Left lung (tissue), 14 donors: ENCODE measurements at regions of chr2 and their contacts with region 1.

Region 1: DNA sequence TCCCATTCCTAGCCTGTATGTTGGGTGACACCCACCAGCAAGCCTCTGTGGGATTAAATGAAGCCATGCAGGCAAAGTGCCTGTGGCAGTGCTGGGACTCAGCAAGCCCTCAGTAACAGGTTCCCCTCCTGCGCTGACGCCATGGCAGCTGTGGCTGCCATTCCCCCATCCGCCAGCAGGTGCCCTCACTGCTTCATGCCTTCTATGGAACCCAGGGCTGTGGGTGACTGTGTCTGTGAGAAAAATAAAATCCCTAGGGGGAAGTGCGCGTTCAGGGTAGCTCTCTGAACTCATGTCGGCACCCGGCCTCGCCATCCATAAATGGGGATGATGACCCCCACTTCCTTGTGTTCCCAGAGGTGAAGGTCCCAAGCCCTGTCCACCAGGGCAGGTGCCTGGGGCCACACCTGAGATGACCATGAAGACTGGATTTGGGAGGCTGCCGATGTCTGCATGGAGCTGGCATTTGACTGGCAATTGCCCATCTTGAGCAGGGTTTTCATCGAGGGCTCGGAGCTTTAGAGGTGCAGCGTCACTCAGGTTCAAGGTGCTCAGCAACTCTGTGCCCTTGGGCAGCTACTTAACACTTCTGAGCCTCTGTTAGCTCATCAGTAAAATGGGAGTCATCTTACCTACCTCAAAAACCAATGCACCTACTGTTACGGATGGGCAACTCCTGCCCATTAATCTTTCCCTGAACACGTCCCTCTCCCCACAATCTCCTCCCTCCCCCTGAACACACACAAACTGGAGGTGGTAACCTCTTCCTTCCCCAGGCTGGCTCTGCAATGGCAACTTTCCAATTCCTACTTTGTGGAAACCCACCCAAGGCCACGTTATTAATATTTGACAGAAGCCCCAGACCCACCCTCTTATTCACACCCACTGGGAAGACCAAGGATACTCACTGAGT is 2.9 kb upstream of the MAL start:
- DNase-seq: peak in 3 of 4 donors; percentile 62 to 87 (median 83)
- ATAC-seq: peak; percentile 82
- H3K4me3 ChIP-seq: no peak overlapping the region
- H3K27ac ChIP-seq: no peak overlapping the region
- H3K4me1 ChIP-seq: peaks cover 10 to 14% of the 10 kb centered on the region in 2 donors
- H3K27me3 ChIP-seq: peaks cover 31 to 61% of the 10 kb centered on the region in 2 donors
- CTCF ChIP-seq: peak; percentile 91 to 93

Region 2: DNA sequence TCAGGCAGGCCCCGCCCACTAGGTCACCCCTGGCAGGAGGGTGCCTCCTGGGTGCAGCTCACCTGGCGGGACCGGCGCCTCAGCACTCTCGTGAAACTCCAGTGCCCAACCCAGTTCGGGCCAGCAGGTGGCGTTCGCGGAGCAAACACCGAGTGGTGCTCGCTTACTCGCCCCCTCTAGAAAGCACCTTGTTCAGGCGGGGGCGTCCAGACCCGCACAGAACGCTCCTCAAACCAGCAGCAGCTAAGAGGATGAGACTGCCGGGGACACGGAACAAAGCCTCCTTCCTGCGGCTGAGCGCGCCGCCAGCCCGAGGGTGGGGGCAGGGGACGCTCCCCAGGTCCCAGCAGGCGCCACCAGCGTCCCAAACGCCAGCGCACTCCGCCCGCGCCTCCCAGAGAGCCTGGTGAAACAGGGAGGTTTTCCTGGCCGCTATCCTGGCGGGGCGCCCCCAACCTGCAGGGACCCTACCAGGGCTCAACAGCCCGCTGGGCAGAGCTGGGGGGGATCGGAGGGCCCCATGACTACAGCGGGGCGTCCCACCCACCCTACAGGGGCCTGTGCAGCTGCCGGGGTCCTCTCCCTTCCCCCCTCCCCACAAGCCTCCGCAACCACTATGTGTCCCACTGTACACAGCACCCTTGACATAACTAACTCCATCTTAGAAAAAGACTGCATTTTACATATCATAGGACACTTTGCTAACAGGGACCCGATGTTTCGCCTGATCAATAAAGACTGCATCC is 54.4 kb after region 1 on chr2:
- intact Hi-C with region 1: loop called in 1 of 2 experiments (anchors 5 kb)
- DNase-seq: peak; percentile 42 to 96 (median 84)
- ATAC-seq: peak; percentile 90
- H3K4me3 ChIP-seq: peak overlapping the region; percentile 28 to 31
- H3K27ac ChIP-seq: no peak overlapping the region
- H3K4me1 ChIP-seq: peaks cover 5 to 25% of the 10 kb centered on the region in 2 donors
- H3K27me3 ChIP-seq: peaks cover 0 to 49% of the 10 kb centered on the region in 2 donors
- CTCF ChIP-seq: peak; percentile 83 to 85

Region 3: GRCh38 chr2:95099910-95100309 is 77.3 kb after region 1 on chr2:
- intact Hi-C with region 1: no loop called
- DNase-seq: no peak
- ATAC-seq: no peak
- H3K4me3 ChIP-seq: no peak overlapping the region
- H3K27ac ChIP-seq: no peak overlapping the region
- H3K4me1 ChIP-seq: no peaks in the 10 kb centered on the region
- H3K27me3 ChIP-seq: no peaks in the 10 kb centered on the region
- CTCF ChIP-seq: no peak

Region 4: DNA sequence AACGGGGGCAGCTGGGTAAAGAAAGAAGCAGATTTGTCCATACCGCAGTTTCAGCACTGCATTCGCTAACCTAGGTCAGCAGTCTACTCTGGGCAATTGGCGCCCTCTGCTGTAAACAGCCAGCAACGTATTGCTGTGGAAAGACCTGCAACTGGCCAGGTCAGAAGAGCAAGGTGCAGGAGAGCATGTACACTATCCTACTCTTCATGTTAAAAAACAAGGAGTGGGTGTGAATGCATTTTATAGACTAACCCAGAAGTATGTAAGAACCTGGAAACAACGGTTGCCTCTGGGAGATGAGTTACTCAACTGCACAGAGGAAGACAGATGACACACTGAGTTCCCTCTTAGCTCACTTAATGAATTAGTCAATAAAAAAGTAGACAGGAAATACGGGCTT is 92.9 kb after region 1 on chr2:
- intact Hi-C with region 1: loop called in 1 of 2 experiments (anchors 10 kb)
- DNase-seq: peak; percentile 37 to 80 (median 72)
- ATAC-seq: peak; percentile 99
- H3K4me3 ChIP-seq: no peak overlapping the region
- H3K27ac ChIP-seq: no peak overlapping the region
- H3K4me1 ChIP-seq: peaks cover 7 to 32% of the 10 kb centered on the region in 2 donors
- H3K27me3 ChIP-seq: no peaks in the 10 kb centered on the region
- CTCF ChIP-seq: peak; percentile 61 to 68